Activated naive CD4-positive, alpha-beta T cell treated with anti-CD3 and anti-CD28 coated beads for 36 hours (primary cell): ENCODE measurements at regions of chr21 and their contacts with region 1.

Region 1: GRCh38 chr21:37503848-37504467 is 137.4 kb downstream of the DYRK1A start:
- DNase-seq: peak; percentile 50
- H3K4me3 Mint-ChIP-seq: peak overlapping the region; percentile 5
- H3K27ac Mint-ChIP-seq: peak overlapping the region; percentile 88
- H3K4me1 Mint-ChIP-seq: peaks cover 26% of the 10 kb centered on the region
- H3K27me3 Mint-ChIP-seq: no peaks in the 10 kb centered on the region

Region 2: GRCh38 chr21:37563641-37564340 is 59.8 kb after region 1 on chr21:
- CTCF ChIA-PET with region 1: no interaction called
- intact Hi-C with region 1: loop called (anchors 5 kb)
- DNase-seq: peak; percentile 92
- H3K4me3 Mint-ChIP-seq: peak overlapping the region; percentile 88
- H3K27ac Mint-ChIP-seq: peak overlapping the region; percentile 99
- H3K4me1 Mint-ChIP-seq: peaks cover 20% of the 10 kb centered on the region
- H3K27me3 Mint-ChIP-seq: no peaks in the 10 kb centered on the region

Region 3: GRCh38 chr21:37575580-37575979 is 71.6 kb after region 1 on chr21:
- CTCF ChIA-PET with region 1: no interaction called
- intact Hi-C with region 1: no loop called
- DNase-seq: no peak
- H3K4me3 Mint-ChIP-seq: no peak overlapping the region
- H3K27ac Mint-ChIP-seq: no peak overlapping the region
- H3K4me1 Mint-ChIP-seq: no peaks in the 10 kb centered on the region
- H3K27me3 Mint-ChIP-seq: peaks cover 2% of the 10 kb centered on the region

Region 4: DNA sequence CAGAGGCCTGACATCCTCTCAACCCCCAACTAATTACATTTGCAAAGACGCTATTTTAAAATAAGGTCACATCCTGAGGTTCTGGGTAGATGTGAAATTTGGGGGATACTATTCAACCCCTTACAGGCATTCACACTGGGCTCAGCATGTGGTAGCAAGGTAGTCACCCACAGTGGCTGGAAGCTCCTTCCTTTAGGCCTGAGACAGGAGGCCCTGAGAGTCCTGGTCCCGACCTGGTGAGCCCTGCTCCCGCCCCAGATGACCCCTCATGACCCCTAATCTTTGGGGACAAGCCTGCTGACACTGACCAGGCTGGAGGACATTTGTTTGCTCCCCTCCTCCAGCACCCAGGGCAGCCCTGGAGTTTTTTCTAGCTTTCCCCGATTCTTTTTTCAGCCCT is 88.5 kb after region 1 on chr21:
- CTCF ChIA-PET with region 1: no interaction called
- intact Hi-C with region 1: no loop called
- DNase-seq: no peak
- H3K4me3 Mint-ChIP-seq: no peak overlapping the region
- H3K27ac Mint-ChIP-seq: no peak overlapping the region
- H3K4me1 Mint-ChIP-seq: no peaks in the 10 kb centered on the region
- H3K27me3 Mint-ChIP-seq: no peaks in the 10 kb centered on the region